ENCODE measurements at regions of chr6 and their contacts with region 1.

Region 1: GRCh38 chr6:31575335-31575901 is at the start of gene TNF:
- DNase-seq: peak; percentile 86
- ATAC-seq: peak; percentile 38
- H3K4me3 Mint-ChIP-seq: peak within 1 kb of the TSS; percentile 93
- H3K27ac Mint-ChIP-seq: peak within 1 kb of the TSS; percentile 96
- H3K4me1 Mint-ChIP-seq: peaks cover 89% of the 10 kb centered on the region
- H3K27me3 Mint-ChIP-seq: no peaks in the 10 kb centered on the region
- total RNA-seq, gene TNF: 53.4 to 55.0 TPM

Region 2: DNA sequence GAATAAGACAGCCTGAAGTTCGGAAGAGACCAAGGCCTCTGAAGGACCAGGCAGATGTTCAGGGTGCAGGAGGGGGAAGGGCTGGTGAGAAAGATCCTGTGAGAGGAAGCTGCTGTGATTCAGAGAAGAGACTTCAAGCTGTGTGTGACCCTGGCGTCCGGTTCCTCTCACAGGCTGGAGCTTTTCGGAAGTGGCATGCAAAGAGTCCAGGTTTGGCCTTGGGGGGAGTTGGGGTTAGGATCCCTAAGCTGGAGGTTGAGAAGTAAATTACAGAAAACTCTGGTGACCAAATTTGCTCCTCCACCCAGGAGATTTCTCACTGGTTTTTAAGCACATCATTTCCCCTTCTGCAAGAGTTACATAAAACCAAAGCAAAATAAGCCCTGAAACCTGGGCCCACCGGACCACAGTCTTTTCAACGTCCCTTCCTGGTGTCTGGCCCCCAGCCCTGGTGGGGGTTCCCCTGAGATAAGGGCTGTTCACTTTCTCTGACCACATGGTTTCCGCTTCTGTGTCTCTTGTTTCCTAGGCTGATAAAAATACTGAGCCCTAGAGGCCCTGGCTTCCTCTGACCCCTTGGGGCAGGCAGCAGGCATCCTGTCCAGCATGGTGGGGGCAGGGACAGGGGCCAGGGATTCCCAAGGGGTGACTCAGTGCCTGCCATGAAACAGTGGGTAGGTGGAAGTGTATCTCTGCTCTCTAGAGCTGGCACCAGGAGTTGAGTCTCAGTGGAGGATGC is 15.3 kb before region 1 on chr6:
- CTCF ChIA-PET with region 1: interaction called, 189 read pairs
- POLR2A ChIA-PET with region 1: interaction called, 55 read pairs
- DNase-seq: peak; percentile 75
- ATAC-seq: peak; percentile 70
- H3K4me3 Mint-ChIP-seq: peak overlapping the region; percentile 65
- H3K27ac Mint-ChIP-seq: peak overlapping the region; percentile 82
- H3K4me1 Mint-ChIP-seq: peaks cover 65% of the 10 kb centered on the region
- H3K27me3 Mint-ChIP-seq: peaks cover 19% of the 10 kb centered on the region

Region 3: DNA sequence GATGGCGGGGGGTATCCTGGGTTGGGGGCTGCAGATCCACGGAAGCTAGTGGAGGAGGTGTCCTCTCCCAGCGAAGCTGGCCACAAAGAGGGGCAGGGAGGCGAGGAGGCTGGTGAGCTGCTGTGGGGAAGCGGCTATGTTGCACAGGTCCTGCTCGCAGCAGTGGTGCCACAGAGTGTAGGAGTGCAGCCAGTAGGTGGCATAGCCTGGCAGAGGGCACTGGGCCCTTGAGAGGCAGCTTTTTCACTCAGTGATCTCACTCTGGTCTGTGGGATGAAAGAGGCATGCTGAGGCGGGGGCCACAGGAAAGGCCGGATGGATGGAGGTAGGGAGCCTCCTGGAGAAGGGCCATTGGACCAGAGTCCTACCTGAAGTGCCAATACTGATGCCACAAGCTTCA is 136.9 kb after region 1 on chr6:
- CTCF ChIA-PET with region 1: no interaction called
- POLR2A ChIA-PET with region 1: no interaction called
- DNase-seq: no peak
- ATAC-seq: peak; percentile 59
- H3K4me3 Mint-ChIP-seq: no peak overlapping the region
- H3K27ac Mint-ChIP-seq: no peak overlapping the region
- H3K4me1 Mint-ChIP-seq: peaks cover 24% of the 10 kb centered on the region
- H3K27me3 Mint-ChIP-seq: peaks cover 10% of the 10 kb centered on the region

Measured in activated CD8-positive, alpha-beta T cell treated with anti-CD3 and anti-CD28 coated beads, Interleukin-2, amount 10 ng/mL, durations not matched to agents 7 days and 5 days (primary cell).